CD4-positive, alpha-beta T cell (primary cell): ENCODE measurements at regions of chr2 and their contacts with region 1.

Region 1: DNA sequence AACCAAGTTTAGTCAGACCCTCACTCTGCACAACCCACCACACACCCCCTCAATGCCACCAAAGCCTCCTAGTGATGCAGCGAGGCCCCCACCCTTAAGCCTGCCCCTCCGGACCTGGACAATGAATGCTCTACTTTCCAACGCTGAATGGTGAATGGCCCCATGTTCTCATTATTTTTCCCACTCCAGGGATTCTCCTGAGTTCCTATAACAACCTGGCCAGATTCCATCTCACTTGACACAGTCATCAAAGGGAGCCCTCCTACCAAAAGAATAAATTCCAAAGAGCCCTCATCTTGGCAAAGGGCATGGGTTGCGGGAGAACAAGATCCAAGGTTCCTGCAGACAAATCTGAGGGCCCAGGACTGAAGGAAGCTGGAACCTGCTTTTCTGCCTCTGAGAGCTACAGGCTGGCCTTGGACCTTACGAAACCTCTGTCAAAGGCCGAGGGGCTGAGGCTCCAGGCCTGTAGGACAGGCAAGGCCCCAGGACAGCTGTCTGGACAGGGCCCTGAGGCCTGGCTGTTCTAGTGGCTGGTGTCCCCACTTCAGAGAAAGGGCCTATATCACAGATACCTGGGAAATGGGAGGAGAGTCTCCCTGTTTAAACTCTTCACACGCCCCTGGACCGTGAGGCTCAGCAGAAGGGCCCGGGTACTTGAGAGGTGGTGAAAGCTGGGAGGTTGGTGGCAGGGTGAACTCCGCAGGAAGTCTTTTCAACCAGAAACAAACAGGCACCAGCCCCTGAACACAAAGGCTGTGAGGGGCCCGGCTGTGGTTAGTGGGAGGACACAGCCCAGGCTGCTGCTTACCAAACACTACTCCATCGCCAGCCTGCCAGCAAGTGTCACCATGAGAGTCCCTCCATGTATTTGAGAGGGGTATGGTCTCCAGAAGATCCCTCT is 27.3 kb downstream of the SFXN5 start:
- DNase-seq: no peak
- ATAC-seq: no peak
- H3K4me3 ChIP-seq: no peak overlapping the region
- H3K4me3 Mint-ChIP-seq: no peak overlapping the region
- H3K27ac ChIP-seq: no peak overlapping the region
- H3K27ac Mint-ChIP-seq: no peak overlapping the region
- H3K4me1 ChIP-seq: no peaks in the 10 kb centered on the region
- H3K4me1 Mint-ChIP-seq: no peaks in the 10 kb centered on the region
- H3K27me3 ChIP-seq: no peaks in the 10 kb centered on the region
- H3K27me3 Mint-ChIP-seq: no peaks in the 10 kb centered on the region
- CTCF ChIP-seq: no peak

Region 2: DNA sequence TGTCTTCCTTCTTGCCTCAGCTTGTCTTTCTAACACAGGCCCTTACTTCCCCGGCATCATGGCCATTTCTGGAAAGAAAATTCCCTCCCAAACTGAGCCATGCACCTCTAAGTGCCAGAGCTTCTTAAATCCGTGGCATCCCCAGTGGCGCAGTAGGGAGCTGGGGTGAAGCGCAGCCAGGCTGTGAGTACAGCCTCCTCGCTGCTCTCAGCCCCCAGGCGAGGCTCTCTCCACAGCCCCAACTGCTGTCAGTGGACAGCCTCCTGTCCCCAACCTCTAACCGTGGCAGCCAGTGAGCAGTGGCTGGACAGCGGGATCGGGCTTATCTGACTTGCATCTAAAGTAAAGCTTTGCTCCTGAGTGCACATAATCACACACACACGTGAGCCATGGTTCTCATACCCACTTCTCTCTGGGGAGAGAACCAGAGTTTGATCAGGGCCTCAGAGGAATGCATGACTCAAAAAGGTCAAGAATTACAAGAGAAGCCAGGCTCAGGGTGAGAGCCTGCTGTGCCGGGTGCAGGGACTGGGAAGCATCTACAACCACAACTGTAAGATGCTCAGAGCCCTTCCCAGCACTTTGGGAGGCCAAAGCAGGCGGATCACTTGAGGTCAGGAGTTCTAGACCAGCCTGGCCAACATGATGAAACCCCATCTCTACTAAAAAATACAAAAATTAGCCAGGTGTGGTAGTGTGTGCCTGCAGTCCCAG is 23.4 kb before region 1 on chr2:
- CTCF ChIA-PET with region 1: no interaction called
- POLR2A ChIA-PET with region 1: no interaction called
- intact Hi-C with region 1: loop called in 1 of 2 experiments (anchors 1 kb)
- DNase-seq: no peak
- ATAC-seq: no peak
- H3K4me3 ChIP-seq: no peak overlapping the region
- H3K4me3 Mint-ChIP-seq: no peak overlapping the region
- H3K27ac ChIP-seq: no peak overlapping the region
- H3K27ac Mint-ChIP-seq: no peak overlapping the region
- H3K4me1 ChIP-seq: no peaks in the 10 kb centered on the region
- H3K4me1 Mint-ChIP-seq: no peaks in the 10 kb centered on the region
- H3K27me3 ChIP-seq: no peaks in the 10 kb centered on the region
- H3K27me3 Mint-ChIP-seq: no peaks in the 10 kb centered on the region
- CTCF ChIP-seq: no peak

Region 3: DNA sequence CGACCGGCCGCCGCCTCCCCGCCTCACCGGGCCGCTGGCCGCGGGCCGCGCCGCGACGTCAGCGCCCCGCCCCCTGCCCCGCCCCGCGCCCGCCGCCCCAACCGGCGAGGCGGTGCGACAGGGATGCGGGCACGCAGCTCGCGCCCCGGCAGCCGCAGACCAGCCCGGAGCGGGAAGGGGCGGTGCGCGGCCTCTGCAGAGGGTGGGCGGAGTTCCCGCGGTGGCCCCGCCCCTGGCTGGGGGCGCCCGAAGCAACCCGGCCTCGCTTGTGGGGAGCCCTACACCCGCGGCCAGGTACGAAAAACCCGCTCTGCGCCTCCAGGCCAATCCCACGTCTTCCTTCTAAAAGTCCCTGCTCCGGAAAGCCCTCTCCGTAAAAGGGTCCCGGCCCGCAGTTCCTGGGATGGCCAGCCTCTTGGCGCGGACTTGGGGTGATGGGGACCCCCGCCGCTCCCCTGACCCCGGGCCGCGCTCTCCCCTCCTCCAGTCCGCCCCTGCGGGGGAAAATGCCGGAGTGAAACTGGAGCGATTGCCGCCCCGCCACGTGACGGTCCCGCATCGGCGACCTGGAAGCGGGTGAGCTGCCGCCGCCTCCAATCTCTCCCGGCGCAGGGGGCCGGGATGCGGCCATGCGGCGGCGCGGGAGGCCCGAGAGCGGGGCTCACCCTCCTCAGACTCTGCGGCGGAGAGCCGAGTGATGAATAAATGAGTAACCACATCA is 68.9 kb after region 1 on chr2 and contains the start of gene RAB11FIP5:
- CTCF ChIA-PET with region 1: no interaction called
- POLR2A ChIA-PET with region 1: no interaction called
- intact Hi-C with region 1: no loop called
- DNase-seq: peak; percentile 58 to 93 (median 75)
- ATAC-seq: peak; percentile 90
- H3K4me3 ChIP-seq: peak within 1 kb of the TSS; percentile 84
- H3K4me3 Mint-ChIP-seq: peak within 1 kb of the TSS; percentile 86
- H3K27ac ChIP-seq: peak within 1 kb of the TSS in 1 of 2 donors; percentile 21
- H3K27ac Mint-ChIP-seq: peak within 1 kb of the TSS; percentile 65
- H3K4me1 ChIP-seq: peaks cover 35% of the 10 kb centered on the region
- H3K4me1 Mint-ChIP-seq: peaks cover 27% of the 10 kb centered on the region
- H3K27me3 ChIP-seq: no peaks in the 10 kb centered on the region
- H3K27me3 Mint-ChIP-seq: no peaks in the 10 kb centered on the region
- CTCF ChIP-seq: no peak
- total RNA-seq, gene RAB11FIP5: 12.6 to 13.8 TPM